ENCODE measurements at regions of chr12 and their contacts with region 1.

Region 1: DNA sequence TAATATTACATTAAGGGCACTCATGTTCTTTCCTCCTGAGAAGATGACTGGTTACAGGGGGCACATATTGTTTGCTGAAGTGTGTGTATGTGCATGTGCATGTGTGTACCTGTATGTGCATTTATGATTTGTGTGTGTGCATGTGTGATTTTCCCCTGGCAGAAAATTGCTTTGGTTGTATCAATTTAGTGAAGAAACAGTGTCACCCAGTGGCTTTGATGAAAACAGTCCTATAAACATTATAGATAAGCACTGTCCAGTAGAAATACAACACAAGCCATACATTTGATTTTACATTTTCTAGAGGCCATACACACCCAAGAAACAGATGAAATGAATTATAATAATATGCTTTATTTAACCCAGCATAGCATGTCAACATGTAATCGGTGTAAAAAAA is 8.6 kb downstream of the PDE3A start:
- DNase-seq: peak; percentile 55 to 65 (median 64)
- H3K4me3 ChIP-seq: no peak overlapping the region
- H3K27ac ChIP-seq: no peak overlapping the region
- H3K4me1 ChIP-seq: peaks cover 0 to 2% (median 0%) of the 10 kb centered on the region in 4 experiments
- H3K27me3 ChIP-seq: peaks cover 0 to 8% (median 2%) of the 10 kb centered on the region in 5 experiments

Region 2: GRCh38 chr12:19739183-19739776 is 637.7 kb before region 1 on chr12:
- CTCF ChIA-PET with region 1: interaction called, 20 read pairs
- POLR2A ChIA-PET with region 1: no interaction called
- DNase-seq: peak; percentile 59 to 82 (median 76)
- H3K4me3 ChIP-seq: no peak overlapping the region
- H3K27ac ChIP-seq: no peak overlapping the region
- H3K4me1 ChIP-seq: no peaks in the 10 kb centered on the region
- H3K27me3 ChIP-seq: no peaks in the 10 kb centered on the region

Region 3: DNA sequence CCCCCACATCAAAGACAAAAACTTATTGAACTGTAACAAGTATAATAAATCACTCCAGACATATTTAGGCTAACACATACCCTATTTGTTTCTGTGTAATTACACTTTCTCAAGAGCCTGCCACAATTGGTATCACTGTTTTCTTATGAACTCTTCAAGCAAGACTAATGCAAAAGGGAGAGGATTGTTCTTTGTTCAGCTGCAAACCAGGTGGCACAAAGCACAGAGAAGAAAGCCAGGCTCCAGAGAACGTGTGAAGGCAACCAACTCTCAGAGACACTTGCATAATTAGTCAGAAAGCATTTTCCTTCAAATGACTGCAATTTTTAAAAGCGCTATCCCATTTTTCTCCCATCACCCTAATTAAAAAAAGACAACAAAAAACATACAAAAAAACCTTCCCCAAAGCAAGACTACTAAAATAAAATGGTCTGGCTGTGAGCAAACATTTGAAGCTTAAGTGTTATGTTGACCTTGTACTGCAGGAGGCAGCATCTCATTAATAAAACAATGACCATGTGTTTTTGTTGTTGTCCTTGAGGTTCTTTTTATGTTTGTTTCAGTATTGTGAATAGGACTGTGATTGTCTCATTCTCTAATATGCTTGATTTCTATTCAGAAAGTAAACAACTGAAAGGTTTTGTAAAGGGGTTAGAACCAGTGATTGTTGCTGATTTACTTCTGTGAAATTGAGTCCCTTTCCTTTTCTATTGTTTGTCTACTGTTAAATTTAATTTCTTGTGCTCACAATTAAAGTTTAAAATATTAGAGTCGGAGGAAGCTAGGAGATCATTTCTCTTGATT is 461.4 kb before region 1 on chr12:
- CTCF ChIA-PET with region 1: interaction called, 12 read pairs
- POLR2A ChIA-PET with region 1: no interaction called
- DNase-seq: peak; percentile 36 to 63 (median 61)
- H3K4me3 ChIP-seq: no peak overlapping the region
- H3K27ac ChIP-seq: no peak overlapping the region
- H3K4me1 ChIP-seq: no peaks in the 10 kb centered on the region
- H3K27me3 ChIP-seq: no peaks in the 10 kb centered on the region

Region 4: GRCh38 chr12:20395791-20396550 is 19.0 kb after region 1 on chr12:
- CTCF ChIA-PET with region 1: interaction called, 12 read pairs
- POLR2A ChIA-PET with region 1: no interaction called
- DNase-seq: no peak
- H3K4me3 ChIP-seq: no peak overlapping the region
- H3K27ac ChIP-seq: no peak overlapping the region
- H3K4me1 ChIP-seq: peaks cover 0 to 9% (median 8%) of the 10 kb centered on the region in 4 experiments
- H3K27me3 ChIP-seq: no peaks in the 10 kb centered on the region